ENCODE measurements at regions of chr6 and their contacts with region 1.

Region 1: DNA sequence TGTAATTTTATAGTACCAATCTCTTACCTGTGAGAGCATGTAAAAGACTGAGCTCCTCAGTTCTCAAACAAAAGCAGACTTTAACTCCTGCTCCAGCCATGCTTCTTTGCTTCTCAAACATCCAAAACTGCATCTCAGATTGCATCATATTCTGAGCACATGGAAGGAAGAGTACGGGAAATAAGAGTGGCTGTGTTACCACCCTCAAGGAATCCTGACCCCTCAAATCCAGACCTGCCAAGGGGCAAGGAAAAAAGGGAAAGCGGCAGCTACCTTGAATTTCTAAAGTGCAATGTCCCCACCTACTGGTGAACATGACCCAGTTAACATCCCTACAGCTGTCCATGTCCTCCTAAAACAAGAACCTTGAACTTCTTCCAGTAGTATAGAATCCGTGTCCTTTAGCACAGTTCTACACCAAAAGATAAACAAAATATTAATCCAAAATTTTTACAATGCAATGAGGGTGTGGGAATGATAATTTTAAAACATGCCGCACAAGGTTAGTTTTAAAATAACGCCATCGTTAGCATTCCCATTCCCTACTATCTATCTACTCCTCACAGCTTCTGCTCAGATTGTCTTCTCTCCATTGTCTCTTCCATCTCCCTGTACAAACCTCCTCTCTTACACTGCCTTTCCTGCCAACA is 34.1 kb upstream of the HLA-DQB1 start:
- DNase-seq: no peak
- H3K4me3 ChIP-seq: no peak overlapping the region
- CTCF ChIP-seq: peak; percentile 57

Region 2: DNA sequence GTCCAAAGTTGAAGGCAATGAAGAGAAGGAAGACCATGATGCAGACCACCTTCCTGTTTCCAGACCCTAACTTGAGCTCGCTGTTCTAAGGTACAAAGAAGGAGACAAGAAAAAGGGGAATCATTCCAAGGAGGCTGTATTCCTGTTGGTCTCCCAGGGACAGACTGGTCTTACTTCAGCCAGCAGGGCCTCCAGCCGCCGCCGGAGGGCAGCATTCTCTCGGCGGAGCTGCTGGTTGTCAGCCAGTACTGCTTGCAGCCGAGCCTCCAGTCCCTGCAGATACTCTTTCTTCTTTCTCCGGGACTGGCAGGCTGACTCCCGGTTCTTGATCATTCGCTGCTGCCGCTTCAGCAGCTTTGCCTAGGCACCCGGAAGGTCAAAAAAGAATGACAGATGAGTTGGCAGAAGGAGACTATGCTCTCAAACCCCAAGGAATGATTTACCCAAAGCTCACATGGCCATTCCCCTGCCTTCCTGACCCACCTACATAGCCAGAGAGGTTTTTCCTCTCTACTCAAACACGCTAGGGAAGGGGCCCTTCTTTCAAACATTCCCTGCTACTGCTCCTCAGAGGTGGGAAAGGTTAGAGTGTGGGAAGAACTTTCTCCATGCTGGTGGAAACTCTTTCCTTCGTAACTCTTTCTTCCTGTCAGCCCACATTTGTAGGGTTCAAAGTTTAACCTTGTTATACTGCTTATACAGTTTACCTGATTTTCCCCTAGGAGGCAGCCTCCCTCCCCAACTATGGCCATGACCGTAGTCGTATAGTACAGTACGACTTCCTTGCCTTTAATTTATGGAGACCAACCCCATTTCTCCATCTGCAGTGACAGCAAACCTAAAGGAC is 581.5 kb before region 1 on chr6:
- CTCF ChIA-PET with region 1: no interaction called
- POLR2A ChIA-PET with region 1: no interaction called
- DNase-seq: no peak
- H3K4me3 ChIP-seq: no peak overlapping the region
- CTCF ChIP-seq: peak; percentile 97

Region 3: GRCh38 chr6:32424589-32425300 is 275.8 kb before region 1 on chr6:
- CTCF ChIA-PET with region 1: interaction called, 14 read pairs
- POLR2A ChIA-PET with region 1: no interaction called
- DNase-seq: no peak
- H3K4me3 ChIP-seq: no peak overlapping the region
- CTCF ChIP-seq: no peak

Region 4: DNA sequence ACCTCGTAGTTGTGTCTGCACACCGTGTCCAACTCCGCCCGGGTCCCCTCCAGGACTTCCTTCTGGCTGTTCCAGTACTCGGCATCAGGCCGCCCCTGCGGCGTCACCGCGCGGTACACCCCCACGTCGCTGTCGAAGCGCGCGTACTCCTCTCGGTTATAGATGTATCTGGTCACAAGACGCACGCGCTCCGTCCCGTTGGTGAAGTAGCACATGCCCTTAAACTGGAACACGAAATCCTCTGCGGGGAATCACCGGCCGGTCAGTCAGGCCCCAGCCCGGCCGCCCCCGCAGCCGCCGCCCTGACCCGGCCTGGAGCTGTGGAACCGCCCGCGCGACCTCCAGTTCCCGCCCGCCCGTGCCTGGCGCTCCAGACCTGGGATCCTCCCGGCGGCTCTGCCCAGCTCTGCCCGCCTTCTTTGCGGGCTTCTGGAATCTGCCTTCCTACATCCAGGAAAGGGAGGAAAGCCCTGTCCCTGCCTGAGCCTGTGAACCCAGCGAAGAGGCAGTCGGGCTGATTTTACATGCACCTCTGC is 35.6 kb before region 1 on chr6:
- CTCF ChIA-PET with region 1: no interaction called
- POLR2A ChIA-PET with region 1: no interaction called
- DNase-seq: no peak
- H3K4me3 ChIP-seq: no peak overlapping the region
- CTCF ChIP-seq: no peak

Region 5: GRCh38 chr6:32713241-32713640 is 12.7 kb after region 1 on chr6:
- CTCF ChIA-PET with region 1: interaction called, 10 read pairs
- POLR2A ChIA-PET with region 1: no interaction called
- DNase-seq: no peak
- H3K4me3 ChIP-seq: no peak overlapping the region
- CTCF ChIP-seq: no peak

Region 6: DNA sequence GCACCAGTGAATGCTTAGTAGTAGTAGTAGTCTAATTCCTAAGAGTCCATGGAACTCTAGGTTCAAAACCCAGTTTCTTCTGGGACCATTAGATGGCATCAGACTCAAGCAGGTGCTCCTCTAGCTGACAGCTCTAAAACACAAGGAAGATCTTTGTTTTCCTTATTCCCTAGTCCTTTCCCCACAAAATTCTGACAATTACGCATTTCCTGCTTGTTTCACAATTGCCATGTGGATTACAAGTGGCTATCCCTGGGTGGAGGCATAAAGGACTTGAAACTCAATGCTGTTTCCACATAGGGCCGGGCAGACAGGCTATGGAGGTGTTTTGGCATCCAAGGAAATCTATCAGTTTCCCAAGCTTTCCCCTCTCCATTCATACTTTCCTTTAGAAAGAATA is 125.5 kb after region 1 on chr6:
- CTCF ChIA-PET with region 1: no interaction called
- POLR2A ChIA-PET with region 1: no interaction called
- DNase-seq: no peak
- H3K4me3 ChIP-seq: no peak overlapping the region
- CTCF ChIP-seq: peak; percentile 24